Esophagus muscularis mucosa (tissue), 4 donors: ENCODE measurements at regions of chr18 and their contacts with region 1.

Region 1: GRCh38 chr18:5295981-5296705 is 617 bp upstream of the ZBTB14 start:
- DNase-seq: peak; percentile 97
- H3K4me3 ChIP-seq: peak overlapping the region; percentile 74 to 96 (median 94)
- H3K27ac ChIP-seq: peak overlapping the region; percentile 95 to 100 (median 98)
- H3K4me1 ChIP-seq: peaks cover 12 to 23% (median 16%) of the 10 kb centered on the region in 4 donors
- H3K27me3 ChIP-seq: no peaks in the 10 kb centered on the region
- CTCF ChIP-seq: peak in 1 of 3 experiments; percentile 9
- EP300 ChIP-seq: no peak
- POLR2A ChIP-seq: peak; percentile 25

Region 2: GRCh38 chr18:5237723-5238370 is 58.3 kb before region 1 on chr18:
- intact Hi-C with region 1: loop called (anchors 2 kb)
- DNase-seq: peak; percentile 94
- H3K4me3 ChIP-seq: peak overlapping the region; percentile 70 to 82 (median 78)
- H3K27ac ChIP-seq: peak overlapping the region; percentile 96 to 98 (median 97)
- H3K4me1 ChIP-seq: peaks cover 18 to 38% (median 36%) of the 10 kb centered on the region in 4 donors
- H3K27me3 ChIP-seq: no peaks in the 10 kb centered on the region
- CTCF ChIP-seq: peak; percentile 18 to 46 (median 25)
- EP300 ChIP-seq: no peak
- POLR2A ChIP-seq: peak; percentile 51